CD8-positive, alpha-beta T cell (primary cell): ENCODE measurements at regions of chr6 and their contacts with region 1.

Region 1: DNA sequence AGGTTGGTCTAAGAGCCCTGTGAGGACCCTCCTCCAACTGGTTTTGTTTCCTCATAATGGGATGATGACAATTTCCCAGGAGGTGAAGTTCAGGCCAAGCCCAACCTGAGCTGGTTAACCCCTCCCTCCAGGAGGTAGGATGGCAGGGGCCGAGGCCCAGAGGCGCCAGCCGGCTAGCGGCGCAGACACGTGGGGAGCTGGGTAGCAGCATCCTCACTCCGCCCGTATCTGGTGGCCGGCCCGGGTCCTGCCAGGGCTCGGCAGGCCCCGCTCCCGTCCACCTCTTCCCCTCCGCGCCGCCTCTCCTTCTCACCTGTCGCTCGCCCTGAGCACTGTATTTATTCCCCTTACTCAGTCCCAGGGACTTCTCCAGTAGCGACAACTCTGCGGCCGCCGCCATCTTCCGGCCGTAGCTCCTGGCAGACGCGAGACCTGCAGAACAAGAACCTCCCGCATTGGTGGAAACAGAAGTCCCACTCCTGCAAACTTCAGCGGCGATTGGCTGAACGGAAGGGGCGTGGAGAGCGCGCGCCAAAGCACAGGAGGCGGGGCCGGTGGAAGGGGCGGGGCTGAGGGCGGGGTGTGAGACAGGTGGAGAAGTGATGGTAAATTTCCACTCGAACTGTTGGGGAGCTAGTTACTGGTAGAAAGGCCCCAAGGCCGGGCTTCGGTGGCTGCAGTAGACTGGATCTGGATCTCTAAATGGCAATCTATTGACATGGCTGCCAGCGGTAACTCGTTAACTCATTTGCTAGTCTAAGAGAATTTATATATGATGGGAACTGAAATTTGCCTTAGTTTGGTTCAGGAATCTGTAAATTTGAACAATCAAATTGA is at the start of gene EEF1E1:
- DNase-seq: peak; percentile 96 to 98 (median 97)
- ATAC-seq: peak; percentile 97
- H3K4me3 ChIP-seq: peak within 1 kb of the TSS; percentile 81 to 92
- H3K4me3 Mint-ChIP-seq: peak within 1 kb of the TSS; percentile 99
- H3K27ac ChIP-seq: peak within 1 kb of the TSS; percentile 75 to 79
- H3K27ac Mint-ChIP-seq: peak within 1 kb of the TSS; percentile 98
- H3K4me1 ChIP-seq: peaks cover 12% of the 10 kb centered on the region
- H3K4me1 Mint-ChIP-seq: peaks cover 33% of the 10 kb centered on the region
- H3K27me3 ChIP-seq: no peaks in the 10 kb centered on the region
- H3K27me3 Mint-ChIP-seq: peaks cover 14% of the 10 kb centered on the region
- CTCF ChIP-seq: no peak
- total RNA-seq, gene EEF1E1: 19.9 to 20.7 TPM

Region 2: DNA sequence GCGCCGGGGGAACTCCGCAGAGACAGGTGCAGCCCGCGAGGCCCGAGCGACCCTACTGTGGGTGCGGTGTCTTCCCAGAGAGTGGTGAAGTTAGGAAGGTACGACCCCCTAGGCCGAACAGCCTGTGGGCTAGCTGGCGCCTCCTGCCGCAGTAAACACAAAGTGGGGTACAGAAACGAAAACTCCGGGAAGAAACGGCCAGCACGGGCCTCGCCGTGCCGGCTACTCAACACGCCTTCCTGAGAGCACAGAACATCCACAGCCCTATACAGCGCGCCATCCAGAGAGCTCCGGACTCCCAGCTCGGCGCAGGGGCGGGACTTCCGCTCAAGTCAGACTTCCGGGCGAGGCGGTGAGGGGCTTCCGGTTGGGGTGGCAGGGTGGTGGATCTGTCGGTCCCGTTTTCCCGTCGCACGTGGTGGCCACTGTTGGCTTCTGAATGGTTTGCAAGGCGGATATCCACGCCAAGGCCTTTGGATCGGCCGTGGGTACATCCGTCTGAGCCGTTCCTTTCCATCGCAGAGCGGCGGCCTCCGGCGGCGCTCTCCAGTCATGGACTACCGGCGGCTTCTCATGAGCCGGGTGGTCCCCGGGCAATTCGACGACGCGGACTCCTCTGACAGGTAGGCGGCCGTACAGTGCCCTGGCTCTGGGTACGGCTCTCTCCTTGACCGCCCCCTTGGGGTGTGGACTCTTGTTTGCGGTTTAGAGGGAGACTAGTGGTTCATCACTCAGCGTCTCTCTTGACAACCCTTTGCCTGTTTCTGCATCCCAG is 712.7 kb before region 1 on chr6 and contains the starts of genes CAGE1 and RIOK1:
- CTCF ChIA-PET with region 1: no interaction called
- POLR2A ChIA-PET with region 1: no interaction called
- intact Hi-C with region 1: loop called (anchors 2 kb)
- DNase-seq: peak; percentile 85 to 97 (median 95)
- ATAC-seq: peak; percentile 89
- H3K4me3 ChIP-seq: peak within 1 kb of the TSS; percentile 77 to 91
- H3K4me3 Mint-ChIP-seq: peak within 1 kb of the TSS; percentile 98
- H3K27ac ChIP-seq: peak within 1 kb of the TSS; percentile 90 to 97
- H3K27ac Mint-ChIP-seq: peak within 1 kb of the TSS; percentile 100
- H3K4me1 ChIP-seq: peaks cover 29% of the 10 kb centered on the region
- H3K4me1 Mint-ChIP-seq: peaks cover 49% of the 10 kb centered on the region
- H3K27me3 ChIP-seq: no peaks in the 10 kb centered on the region
- H3K27me3 Mint-ChIP-seq: no peaks in the 10 kb centered on the region
- CTCF ChIP-seq: no peak
- total RNA-seq, gene CAGE1: 0.33 to 0.49 TPM
- total RNA-seq, gene RIOK1: 47.3 to 56.3 TPM

Region 3: DNA sequence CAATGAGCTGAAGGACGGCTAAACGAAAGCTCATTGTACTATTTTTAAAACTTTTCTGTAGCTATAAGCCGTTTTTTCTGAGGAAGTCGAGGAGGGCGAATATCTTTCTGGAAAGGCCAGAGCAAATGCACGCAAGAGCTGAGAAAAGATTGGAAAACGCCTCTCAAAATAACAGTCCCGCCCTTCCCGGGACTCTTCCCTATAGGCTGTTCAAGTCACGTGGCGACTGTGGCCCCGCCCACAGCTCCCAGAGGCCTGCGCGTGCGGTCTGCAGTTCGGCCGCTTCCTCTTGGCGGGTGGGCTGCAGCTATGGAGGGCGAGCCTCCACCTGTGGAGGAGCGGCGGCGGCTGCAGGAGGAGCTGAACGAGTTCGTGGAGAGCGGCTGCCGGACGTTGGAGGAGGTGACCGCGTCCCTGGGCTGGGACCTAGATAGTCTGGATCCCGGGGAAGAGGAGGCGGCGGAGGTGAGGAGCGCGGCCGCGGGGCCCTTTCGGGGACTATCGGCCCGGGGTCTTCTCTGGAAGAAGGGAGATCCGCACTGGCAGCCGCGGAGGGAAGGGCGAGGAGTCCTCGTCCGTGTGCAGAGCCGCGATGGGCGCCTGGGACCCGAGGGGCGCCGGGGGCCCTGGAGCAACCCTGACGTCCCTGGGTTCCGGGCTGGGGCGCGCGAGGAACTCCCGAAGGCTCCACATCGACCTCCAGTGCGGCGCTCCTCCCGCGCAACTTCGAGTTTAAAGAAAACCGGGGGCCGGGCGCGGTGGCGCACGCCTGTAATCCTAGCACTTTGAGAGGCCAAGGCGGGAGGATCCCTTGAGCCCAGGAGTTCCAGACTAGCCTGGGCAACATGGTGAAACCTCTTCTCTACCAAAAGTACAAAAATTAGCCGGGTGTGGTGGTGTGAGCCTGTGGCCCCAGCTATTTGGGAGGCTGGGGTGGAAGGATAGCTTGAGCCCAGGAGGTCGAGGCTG is 512.1 kb before region 1 on chr6 and contains the start of gene SNRNP48:
- CTCF ChIA-PET with region 1: no interaction called
- POLR2A ChIA-PET with region 1: no interaction called
- intact Hi-C with region 1: loop called in 1 of 2 experiments (anchors 10 kb)
- DNase-seq: peak; percentile 80 to 94 (median 90)
- ATAC-seq: peak; percentile 97
- H3K4me3 ChIP-seq: peak within 1 kb of the TSS; percentile 76 to 92
- H3K4me3 Mint-ChIP-seq: peak within 1 kb of the TSS; percentile 100
- H3K27ac ChIP-seq: peak within 1 kb of the TSS; percentile 58 to 61
- H3K27ac Mint-ChIP-seq: peak within 1 kb of the TSS; percentile 95
- H3K4me1 ChIP-seq: peaks cover 25% of the 10 kb centered on the region
- H3K4me1 Mint-ChIP-seq: peaks cover 47% of the 10 kb centered on the region
- H3K27me3 ChIP-seq: no peaks in the 10 kb centered on the region
- H3K27me3 Mint-ChIP-seq: no peaks in the 10 kb centered on the region
- CTCF ChIP-seq: no peak
- total RNA-seq, gene SNRNP48: 12.2 to 12.9 TPM

Region 4: DNA sequence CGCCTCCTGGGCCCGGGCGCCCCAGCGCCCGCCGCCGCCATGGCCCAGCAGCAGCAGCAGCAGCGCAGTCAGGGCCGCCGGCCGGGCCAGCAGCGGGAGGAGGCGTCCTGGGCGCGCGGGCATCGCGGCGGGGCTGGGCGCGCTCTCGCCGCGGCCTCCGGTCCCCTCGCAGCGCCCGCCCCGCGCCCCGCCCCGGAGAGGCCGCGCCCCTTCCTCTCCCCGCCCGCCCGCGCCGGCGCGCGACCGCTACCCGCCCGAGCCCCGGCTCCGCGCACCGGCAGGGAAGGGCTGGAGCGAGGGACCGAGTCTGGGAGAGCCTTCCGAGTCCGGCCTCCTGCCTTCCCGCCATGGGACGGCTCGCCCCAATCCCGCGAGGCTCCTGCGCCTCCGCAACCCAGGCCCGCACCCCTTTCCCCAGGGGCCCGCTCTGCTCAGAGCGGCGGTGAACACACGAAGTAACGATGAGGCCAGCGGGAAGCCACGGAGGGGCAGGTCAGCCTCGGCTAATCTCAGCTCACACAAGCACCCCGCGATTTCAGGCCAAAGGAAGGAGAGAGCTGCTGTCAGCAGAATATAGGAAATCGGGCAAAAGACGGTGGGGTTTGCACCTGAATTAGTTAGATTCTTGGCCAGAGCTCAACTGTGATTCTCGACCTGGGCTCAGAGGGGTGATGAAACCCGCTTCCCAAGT is 191.5 kb before region 1 on chr6 and contains the start of gene TXNDC5:
- CTCF ChIA-PET with region 1: no interaction called
- POLR2A ChIA-PET with region 1: no interaction called
- intact Hi-C with region 1: loop called (anchors 2 to 5 kb)
- DNase-seq: peak; percentile 38 to 81 (median 66)
- ATAC-seq: peak; percentile 87
- H3K4me3 ChIP-seq: peak within 1 kb of the TSS; percentile 69 to 75
- H3K4me3 Mint-ChIP-seq: peak within 1 kb of the TSS; percentile 77
- H3K27ac ChIP-seq: no peak within 1 kb of the TSS
- H3K27ac Mint-ChIP-seq: no peak within 1 kb of the TSS
- H3K4me1 ChIP-seq: peaks cover 15% of the 10 kb centered on the region
- H3K4me1 Mint-ChIP-seq: peaks cover 8% of the 10 kb centered on the region
- H3K27me3 ChIP-seq: no peaks in the 10 kb centered on the region
- H3K27me3 Mint-ChIP-seq: peaks cover 2% of the 10 kb centered on the region
- CTCF ChIP-seq: no peak
- total RNA-seq, gene TXNDC5: 5.8 to 7.6 TPM

Region 5: DNA sequence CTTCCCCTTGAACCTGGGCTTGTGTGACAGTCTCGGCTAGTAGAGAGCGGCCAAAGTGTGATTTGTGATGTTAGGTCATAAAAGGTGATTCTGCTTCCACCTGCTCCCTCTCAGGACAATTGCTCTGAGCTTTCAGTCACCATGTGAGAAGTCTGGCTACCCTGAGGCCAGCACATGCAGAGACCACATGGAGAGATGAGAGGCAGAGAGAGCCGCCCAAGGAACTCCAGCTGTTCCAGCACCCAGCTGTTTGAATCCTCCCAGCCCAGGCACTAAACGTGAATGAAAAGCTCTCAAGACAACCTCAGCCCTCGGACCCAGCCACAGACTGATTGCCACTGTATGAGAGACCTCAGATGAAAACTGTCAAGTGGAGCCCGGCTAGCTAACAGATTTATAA is 143.4 kb after region 1 on chr6:
- CTCF ChIA-PET with region 1: no interaction called
- POLR2A ChIA-PET with region 1: no interaction called
- intact Hi-C with region 1: no loop called
- DNase-seq: no peak
- ATAC-seq: no peak
- H3K4me3 ChIP-seq: no peak overlapping the region
- H3K4me3 Mint-ChIP-seq: no peak overlapping the region
- H3K27ac ChIP-seq: no peak overlapping the region
- H3K27ac Mint-ChIP-seq: no peak overlapping the region
- H3K4me1 ChIP-seq: no peaks in the 10 kb centered on the region
- H3K4me1 Mint-ChIP-seq: no peaks in the 10 kb centered on the region
- H3K27me3 ChIP-seq: no peaks in the 10 kb centered on the region
- H3K27me3 Mint-ChIP-seq: peaks cover 18% of the 10 kb centered on the region
- CTCF ChIP-seq: no peak